ENCODE measurements at regions of chr9 and their contacts with region 1.

Region 1: GRCh38 chr9:92293452-92294296 is at the start of gene IARS1:
- DNase-seq: peak; percentile 95 to 100
- H3K4me3 ChIP-seq: peak within 1 kb of the TSS; percentile 86 to 95 (median 92)
- H3K27ac ChIP-seq: peak within 1 kb of the TSS; percentile 88
- H3K4me1 ChIP-seq: peaks cover 0 to 3% (median 2%) of the 10 kb centered on the region in 4 experiments; a peak in 3 of 7 replicates
- H3K27me3 ChIP-seq: no peaks in the 10 kb centered on the region
- CTCF ChIP-seq: peak in 2 of 3 experiments; percentile 34 to 38; a peak in 2 of 4 replicates
- EP300 ChIP-seq: no peak
- POLR2A ChIP-seq: peak; percentile 87 to 93
- RAD21 ChIP-seq: no peak
- total RNA-seq, gene IARS1: 224 and 243 TPM in 2 replicates

Region 2: DNA sequence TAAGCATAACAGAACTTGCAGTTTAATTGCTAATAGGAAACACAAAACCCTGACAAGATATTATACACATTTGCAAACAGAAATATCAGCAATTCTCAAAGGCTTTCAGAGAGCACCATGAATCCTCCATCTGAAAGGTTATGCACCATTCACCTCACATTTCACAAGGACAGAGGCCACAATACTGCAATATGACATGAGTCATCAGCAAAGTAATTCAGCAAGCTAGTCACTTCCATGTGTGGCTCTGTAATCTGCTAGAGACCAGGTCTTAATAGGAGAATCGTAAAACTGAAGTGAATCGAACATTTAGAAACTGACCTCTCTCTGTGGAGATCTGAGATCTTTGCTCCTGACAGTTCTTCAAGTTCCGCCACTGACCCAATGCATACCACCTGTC is 28.5 kb before region 1 on chr9:
- CTCF ChIA-PET with region 1: no interaction called
- POLR2A ChIA-PET with region 1: interaction called, 23 read pairs
- DNase-seq: no peak
- H3K4me3 ChIP-seq: no peak overlapping the region
- H3K27ac ChIP-seq: no peak overlapping the region
- H3K4me1 ChIP-seq: no peaks in the 10 kb centered on the region
- H3K27me3 ChIP-seq: no peaks in the 10 kb centered on the region
- CTCF ChIP-seq: no peak
- EP300 ChIP-seq: no peak
- POLR2A ChIP-seq: no peak
- RAD21 ChIP-seq: no peak

Region 3: GRCh38 chr9:92276331-92277032 is 17.2 kb before region 1 on chr9:
- CTCF ChIA-PET with region 1: interaction called, 3 read pairs
- POLR2A ChIA-PET with region 1: interaction called, 87 read pairs
- DNase-seq: no peak
- H3K4me3 ChIP-seq: no peak overlapping the region
- H3K27ac ChIP-seq: no peak overlapping the region
- H3K4me1 ChIP-seq: no peaks in the 10 kb centered on the region
- H3K27me3 ChIP-seq: no peaks in the 10 kb centered on the region
- CTCF ChIP-seq: no peak
- EP300 ChIP-seq: no peak
- POLR2A ChIP-seq: no peak
- RAD21 ChIP-seq: no peak

Region 4: GRCh38 chr9:92325269-92325990 is 31.8 kb after region 1 on chr9 and contains the starts of genes CENPP and NOL8:
- CTCF ChIA-PET with region 1: no interaction called
- POLR2A ChIA-PET with region 1: interaction called, 16 read pairs
- DNase-seq: peak; percentile 31 to 85
- H3K4me3 ChIP-seq: peak within 1 kb of the TSS; percentile 70 to 97 (median 92)
- H3K27ac ChIP-seq: peak within 1 kb of the TSS; percentile 97
- H3K4me1 ChIP-seq: peaks cover 0 to 4% (median under 1%) of the 10 kb centered on the region in 4 experiments; a peak in 1 of 7 replicates
- H3K27me3 ChIP-seq: no peaks in the 10 kb centered on the region
- CTCF ChIP-seq: no peak
- EP300 ChIP-seq: peak in 1 of 2 experiments; percentile 89; a peak in 1 of 3 replicates
- POLR2A ChIP-seq: peak; percentile 80 to 83; a peak in 2 of 3 replicates
- RAD21 ChIP-seq: no peak
- total RNA-seq, gene CENPP: 9.9 and 10.8 TPM in 2 replicates
- total RNA-seq, gene NOL8: 30.4 and 31.8 TPM in 2 replicates

Measured in H1 (cell line).